Activated CD8-positive, alpha-beta T cell treated with anti-CD3 and anti-CD28 coated beads, Interleukin-2, amount 10 ng/mL, durations not matched to agents 7 days and 5 days (primary cell): ENCODE measurements at regions of chr1 and their contacts with region 1.

Region 1: GRCh38 chr1:204506961-204507387 is 9.2 kb upstream of the MDM4 start:
- DNase-seq: peak; percentile 94
- ATAC-seq: peak; percentile 82
- H3K4me3 Mint-ChIP-seq: peak overlapping the region; percentile 88
- H3K27ac Mint-ChIP-seq: peak overlapping the region; percentile 97
- H3K4me1 Mint-ChIP-seq: peaks cover 42% of the 10 kb centered on the region
- H3K27me3 Mint-ChIP-seq: no peaks in the 10 kb centered on the region

Region 2: GRCh38 chr1:204411451-204412204 is 95.3 kb before region 1 on chr1 and contains the start of gene PPP1R15B:
- CTCF ChIA-PET with region 1: interaction called, 5 read pairs
- POLR2A ChIA-PET with region 1: interaction called, 10 read pairs
- DNase-seq: peak; percentile 98
- ATAC-seq: peak; percentile 90
- H3K4me3 Mint-ChIP-seq: peak within 1 kb of the TSS; percentile 99
- H3K27ac Mint-ChIP-seq: peak within 1 kb of the TSS; percentile 100
- H3K4me1 Mint-ChIP-seq: peaks cover 12% of the 10 kb centered on the region
- H3K27me3 Mint-ChIP-seq: no peaks in the 10 kb centered on the region
- total RNA-seq, gene PPP1R15B: 64.7 to 66.0 TPM

Region 3: GRCh38 chr1:204480515-204480914 is 26.5 kb before region 1 on chr1:
- CTCF ChIA-PET with region 1: interaction called, 28 read pairs
- POLR2A ChIA-PET with region 1: no interaction called
- DNase-seq: no peak
- ATAC-seq: peak; percentile 32
- H3K4me3 Mint-ChIP-seq: no peak overlapping the region
- H3K27ac Mint-ChIP-seq: no peak overlapping the region
- H3K4me1 Mint-ChIP-seq: peaks cover 34% of the 10 kb centered on the region
- H3K27me3 Mint-ChIP-seq: no peaks in the 10 kb centered on the region

Region 4: GRCh38 chr1:204523605-204524215 is 16.7 kb after region 1 on chr1:
- CTCF ChIA-PET with region 1: interaction called, 69 read pairs
- POLR2A ChIA-PET with region 1: interaction called, 87 read pairs
- DNase-seq: no peak
- ATAC-seq: no peak
- H3K4me3 Mint-ChIP-seq: no peak overlapping the region
- H3K27ac Mint-ChIP-seq: peak overlapping the region; percentile 9
- H3K4me1 Mint-ChIP-seq: peaks cover 45% of the 10 kb centered on the region
- H3K27me3 Mint-ChIP-seq: no peaks in the 10 kb centered on the region

Region 5: GRCh38 chr1:204763706-204764427 is 256.9 kb after region 1 on chr1:
- CTCF ChIA-PET with region 1: interaction called, 10 read pairs
- POLR2A ChIA-PET with region 1: no interaction called
- DNase-seq: peak; percentile 79
- ATAC-seq: peak; percentile 97
- H3K4me3 Mint-ChIP-seq: peak overlapping the region; percentile 32
- H3K27ac Mint-ChIP-seq: no peak overlapping the region
- H3K4me1 Mint-ChIP-seq: peaks cover 9% of the 10 kb centered on the region
- H3K27me3 Mint-ChIP-seq: peaks cover 39% of the 10 kb centered on the region